ENCODE measurements at regions of chr6 and their contacts with region 1.

Region 1: DNA sequence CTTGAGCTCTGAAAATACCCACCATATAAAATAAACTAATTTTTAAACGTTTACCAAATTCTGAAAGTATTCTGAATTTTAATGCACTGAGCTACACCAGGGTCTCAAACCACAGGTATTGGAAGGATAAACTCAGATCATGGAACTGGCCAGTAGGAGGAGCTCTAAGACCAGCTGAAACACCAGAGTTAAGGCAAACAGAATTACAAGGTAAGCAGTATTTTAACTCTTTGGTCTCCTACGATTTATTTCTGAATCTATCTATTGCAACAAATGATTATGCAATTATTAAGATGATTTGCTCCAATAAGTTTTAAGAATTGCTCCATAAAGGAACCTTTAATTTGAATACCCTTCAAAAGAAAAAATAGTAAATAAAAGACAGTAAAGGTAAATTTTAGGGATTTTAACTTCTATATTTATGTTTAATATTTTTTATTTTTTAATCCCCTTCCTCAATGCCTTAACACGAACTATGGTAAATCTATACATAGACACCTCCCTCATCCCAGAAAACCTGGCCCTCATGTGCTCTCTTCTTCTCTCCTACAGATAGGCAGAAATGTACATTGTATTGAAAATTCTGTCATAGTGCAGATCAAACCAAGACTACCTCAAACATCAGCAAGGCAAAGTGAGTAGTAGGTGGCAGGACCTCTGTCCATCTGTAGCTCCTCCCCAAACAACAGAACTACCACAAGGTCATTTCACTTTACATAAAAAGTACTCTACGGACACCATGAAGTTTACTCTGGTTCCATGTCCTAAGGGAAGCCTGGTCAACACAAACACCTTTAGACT is 58.4 kb downstream of the SMLR1 start:
- DNase-seq: peak; percentile 83
- H3K4me3 ChIP-seq: no peak overlapping the region
- H3K27ac ChIP-seq: no peak overlapping the region
- H3K4me1 ChIP-seq: no peaks in the 10 kb centered on the region
- H3K27me3 ChIP-seq: no peaks in the 10 kb centered on the region
- CTCF ChIP-seq: peak; percentile 85

Region 2: GRCh38 chr6:131116749-131117360 is 231.3 kb after region 1 on chr6:
- intact Hi-C with region 1: loop called (anchors 2 kb)
- DNase-seq: peak; percentile 34
- H3K4me3 ChIP-seq: no peak overlapping the region
- H3K27ac ChIP-seq: no peak overlapping the region
- H3K4me1 ChIP-seq: no peaks in the 10 kb centered on the region
- H3K27me3 ChIP-seq: no peaks in the 10 kb centered on the region
- CTCF ChIP-seq: peak; percentile 28

Region 3: DNA sequence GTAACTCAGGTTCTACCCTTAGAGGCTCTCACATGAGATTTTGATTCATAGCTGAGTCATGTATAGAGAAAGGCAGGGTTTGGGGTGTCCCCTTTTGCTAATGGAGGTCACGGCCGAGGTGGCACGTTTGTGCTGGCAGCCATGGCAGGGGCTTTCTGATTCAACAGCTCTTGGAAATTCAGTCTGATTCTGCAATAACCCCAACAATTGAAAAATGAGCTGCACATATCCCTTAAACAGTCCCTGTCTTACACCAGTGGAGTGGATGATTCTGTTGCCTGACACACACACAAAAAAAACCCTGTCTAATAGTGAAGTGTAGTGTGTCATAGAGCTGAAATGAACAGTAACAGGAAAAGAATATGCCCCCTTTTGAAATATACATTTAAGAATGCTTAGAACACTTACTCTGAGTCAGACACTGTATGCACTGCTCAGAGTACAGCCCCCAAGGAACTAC is 647.0 kb after region 1 on chr6:
- intact Hi-C with region 1: loop called (anchors 10 kb)
- DNase-seq: no peak
- H3K4me3 ChIP-seq: no peak overlapping the region
- H3K27ac ChIP-seq: no peak overlapping the region
- H3K4me1 ChIP-seq: no peaks in the 10 kb centered on the region
- H3K27me3 ChIP-seq: no peaks in the 10 kb centered on the region
- CTCF ChIP-seq: no peak